Activated CD4-positive, alpha-beta T cell treated with anti-CD3 and anti-CD28 coated beads for 36 hours (primary cell): ENCODE measurements at regions of chr19 and their contacts with region 1.

Region 1: DNA sequence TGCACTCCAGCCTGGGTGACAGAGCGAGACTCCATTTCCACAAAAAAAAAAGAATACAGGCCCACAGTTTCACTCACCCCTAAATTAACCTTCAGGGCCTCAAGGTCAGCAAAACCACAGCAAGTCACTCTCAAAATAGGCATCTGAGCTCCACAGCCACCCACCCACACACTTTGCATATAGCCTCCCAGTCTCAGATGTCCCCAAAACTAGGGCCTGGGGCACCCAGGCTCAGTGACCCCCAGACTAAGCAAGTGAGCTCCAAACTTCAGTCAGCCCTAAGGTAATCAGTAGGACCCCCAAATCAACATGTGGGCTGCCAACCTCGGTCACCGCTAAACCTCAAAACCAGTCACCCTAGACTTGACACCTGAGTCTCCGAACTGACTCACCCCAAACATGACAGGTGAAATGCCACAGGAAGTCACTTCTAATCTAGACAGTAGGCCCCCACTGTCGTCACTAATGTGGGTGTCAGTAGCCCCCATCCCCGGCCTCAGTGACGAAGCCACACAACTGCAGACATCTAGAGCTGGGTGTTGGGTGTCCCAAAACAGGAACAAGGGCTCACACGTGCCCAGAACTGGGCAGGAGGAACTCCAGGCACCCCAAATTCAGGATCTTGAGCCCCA is 13.9 kb downstream of the RABAC1 start:
- DNase-seq: peak; percentile 95
- ATAC-seq: peak; percentile 92
- H3K4me3 Mint-ChIP-seq: peak overlapping the region; percentile 41
- H3K27ac Mint-ChIP-seq: peak overlapping the region; percentile 96
- H3K4me1 Mint-ChIP-seq: peaks cover 50% of the 10 kb centered on the region
- H3K27me3 Mint-ChIP-seq: peaks cover 4% of the 10 kb centered on the region

Region 2: GRCh38 chr19:41641879-41642485 is 303.3 kb before region 1 on chr19:
- CTCF ChIA-PET with region 1: no interaction called
- POLR2A ChIA-PET with region 1: no interaction called
- intact Hi-C with region 1: no loop called
- DNase-seq: peak; percentile 82
- ATAC-seq: peak; percentile 76
- H3K4me3 Mint-ChIP-seq: no peak overlapping the region
- H3K27ac Mint-ChIP-seq: no peak overlapping the region
- H3K4me1 Mint-ChIP-seq: peaks cover 19% of the 10 kb centered on the region
- H3K27me3 Mint-ChIP-seq: peaks cover 7% of the 10 kb centered on the region

Region 3: GRCh38 chr19:41740415-41741243 is 204.6 kb before region 1 on chr19:
- CTCF ChIA-PET with region 1: no interaction called
- POLR2A ChIA-PET with region 1: no interaction called
- intact Hi-C with region 1: loop called in 1 of 2 experiments (anchors 1 kb)
- DNase-seq: peak; percentile 37
- ATAC-seq: peak; percentile 91
- H3K4me3 Mint-ChIP-seq: no peak overlapping the region
- H3K27ac Mint-ChIP-seq: no peak overlapping the region
- H3K4me1 Mint-ChIP-seq: peaks cover 21% of the 10 kb centered on the region
- H3K27me3 Mint-ChIP-seq: peaks cover 42% of the 10 kb centered on the region

Region 4: DNA sequence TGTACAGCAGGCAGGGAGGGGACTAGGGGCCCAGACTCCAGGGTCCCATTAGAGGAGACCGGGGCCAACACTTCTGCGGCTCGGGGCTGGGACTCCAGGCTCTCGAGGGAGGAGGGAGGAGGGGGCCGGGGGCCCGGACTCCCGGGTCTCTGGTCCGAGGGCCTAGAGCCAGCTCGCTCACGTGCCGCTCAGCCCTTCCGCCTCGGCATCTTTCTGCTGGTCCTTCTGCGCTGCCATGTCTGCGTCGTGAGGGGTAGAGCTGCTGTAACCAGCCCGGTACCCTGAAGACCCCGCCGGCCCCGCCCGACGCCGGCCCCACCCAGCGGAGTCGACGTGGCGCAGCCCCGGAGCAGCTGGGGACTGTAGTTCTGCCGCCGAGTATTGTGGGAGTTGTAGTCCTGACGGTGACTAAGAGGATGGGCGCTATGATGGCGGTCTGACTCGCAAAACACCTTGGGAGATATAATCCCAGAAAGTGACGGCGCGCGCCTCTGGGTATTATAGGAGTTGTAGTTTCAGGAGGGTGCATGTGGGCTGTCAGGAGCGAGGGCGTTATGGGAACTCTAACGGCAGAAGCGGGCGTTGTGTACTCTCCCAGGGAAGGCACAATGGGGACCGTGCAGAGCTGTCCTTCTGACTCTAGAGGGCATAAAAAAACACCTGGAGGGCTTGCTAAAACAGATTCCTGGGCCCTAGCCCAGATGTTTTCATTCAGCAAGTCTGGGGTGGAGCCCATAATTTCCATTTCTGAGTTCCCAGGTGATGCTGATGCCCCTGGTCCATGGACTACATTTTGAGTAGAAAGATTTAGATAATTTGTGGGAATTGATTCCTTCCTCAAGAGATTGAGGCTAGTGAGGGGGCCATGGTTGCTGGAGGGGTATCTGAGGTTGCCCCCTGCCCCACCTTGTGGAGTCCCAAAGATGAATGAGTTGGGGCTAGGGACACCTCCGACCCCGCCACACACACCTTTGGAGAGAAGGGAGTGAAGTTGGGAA is 14.1 kb after region 1 on chr19 and contains the start of gene RABAC1:
- CTCF ChIA-PET with region 1: interaction called, 14 read pairs
- POLR2A ChIA-PET with region 1: interaction called, 6 read pairs
- intact Hi-C with region 1: loop called in 1 of 2 experiments (anchors 1 kb)
- DNase-seq: peak; percentile 94
- ATAC-seq: peak; percentile 88
- H3K4me3 Mint-ChIP-seq: peak within 1 kb of the TSS; percentile 81
- H3K27ac Mint-ChIP-seq: peak within 1 kb of the TSS; percentile 87
- H3K4me1 Mint-ChIP-seq: peaks cover 16% of the 10 kb centered on the region
- H3K27me3 Mint-ChIP-seq: no peaks in the 10 kb centered on the region
- total RNA-seq, gene RABAC1: 35.3 to 49.7 TPM

Region 5: GRCh38 chr19:42042455-42043170 is 97.4 kb after region 1 on chr19:
- CTCF ChIA-PET with region 1: no interaction called
- POLR2A ChIA-PET with region 1: no interaction called
- intact Hi-C with region 1: no loop called
- DNase-seq: no peak
- ATAC-seq: no peak
- H3K4me3 Mint-ChIP-seq: no peak overlapping the region
- H3K27ac Mint-ChIP-seq: no peak overlapping the region
- H3K4me1 Mint-ChIP-seq: no peaks in the 10 kb centered on the region
- H3K27me3 Mint-ChIP-seq: peaks cover 2% of the 10 kb centered on the region